ENCODE measurements at regions of chr4 and their contacts with region 1.

Region 1: GRCh38 chr4:73573794-73574406 is 46.3 kb downstream of the RASSF6 start:
- DNase-seq: peak; percentile 7 to 74
- ATAC-seq: peak; percentile 66 to 88; a peak in 5 of 6 replicates
- H3K4me3 ChIP-seq: no peak overlapping the region
- H3K27ac ChIP-seq: peak overlapping the region in 1 of 2 experiments; percentile 35; a peak in 2 of 6 replicates
- H3K4me1 ChIP-seq: no peaks in the 10 kb centered on the region
- CTCF ChIP-seq: peak; percentile 77
- EP300 ChIP-seq: no peak
- POLR2A ChIP-seq: no peak
- RAD21 ChIP-seq: peak; percentile 90

Region 2: GRCh38 chr4:73341454-73341853 is 232.4 kb before region 1 on chr4:
- CTCF ChIA-PET with region 1: interaction called, 10 read pairs
- POLR2A ChIA-PET with region 1: no interaction called
- DNase-seq: peak; percentile 15 to 67
- ATAC-seq: peak; percentile 91
- H3K4me3 ChIP-seq: no peak overlapping the region
- H3K27ac ChIP-seq: no peak overlapping the region
- H3K4me1 ChIP-seq: peaks cover 21% of the 10 kb centered on the region
- CTCF ChIP-seq: peak; percentile 70
- EP300 ChIP-seq: no peak
- POLR2A ChIP-seq: no peak
- RAD21 ChIP-seq: peak; percentile 86 to 88

Region 3: DNA sequence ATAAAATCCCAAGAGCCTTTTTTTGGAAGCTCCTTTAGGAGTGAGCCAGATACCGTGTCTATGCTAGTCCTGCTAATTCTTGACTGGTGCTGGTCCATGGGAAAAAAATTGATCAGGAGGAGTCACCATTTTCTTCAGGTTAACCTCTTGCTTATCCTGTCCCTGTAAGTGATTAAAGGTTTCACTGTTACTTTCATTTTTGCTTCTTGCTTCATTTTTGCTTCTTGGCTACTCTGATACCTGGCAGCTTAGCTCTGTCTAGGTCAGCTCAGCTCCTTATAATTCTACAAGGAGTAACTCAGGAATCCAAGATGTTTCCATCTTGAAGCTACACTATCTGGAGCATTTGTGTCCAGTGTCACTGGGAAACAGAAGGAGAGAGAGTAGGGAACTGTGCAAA is 46.7 kb before region 1 on chr4:
- CTCF ChIA-PET with region 1: no interaction called
- POLR2A ChIA-PET with region 1: no interaction called
- DNase-seq: no peak
- ATAC-seq: no peak
- H3K4me3 ChIP-seq: no peak overlapping the region
- H3K27ac ChIP-seq: no peak overlapping the region
- H3K4me1 ChIP-seq: no peaks in the 10 kb centered on the region
- CTCF ChIP-seq: no peak
- EP300 ChIP-seq: no peak
- POLR2A ChIP-seq: no peak
- RAD21 ChIP-seq: no peak

Region 4: GRCh38 chr4:73646117-73646516 is 72.2 kb after region 1 on chr4:
- CTCF ChIA-PET with region 1: interaction called, 57 read pairs
- POLR2A ChIA-PET with region 1: no interaction called
- DNase-seq: no peak
- ATAC-seq: no peak
- H3K4me3 ChIP-seq: no peak overlapping the region
- H3K27ac ChIP-seq: no peak overlapping the region
- H3K4me1 ChIP-seq: no peaks in the 10 kb centered on the region
- CTCF ChIP-seq: no peak
- EP300 ChIP-seq: no peak
- POLR2A ChIP-seq: no peak
- RAD21 ChIP-seq: no peak

Region 5: GRCh38 chr4:73653695-73654106 is 79.8 kb after region 1 on chr4:
- CTCF ChIA-PET with region 1: interaction called, 57 read pairs
- POLR2A ChIA-PET with region 1: no interaction called
- DNase-seq: peak; percentile 29 to 34
- ATAC-seq: peak; percentile 70 to 79; a peak in 5 of 6 replicates
- H3K4me3 ChIP-seq: no peak overlapping the region
- H3K27ac ChIP-seq: no peak overlapping the region
- H3K4me1 ChIP-seq: no peaks in the 10 kb centered on the region
- CTCF ChIP-seq: peak; percentile 67
- EP300 ChIP-seq: no peak
- POLR2A ChIP-seq: no peak
- RAD21 ChIP-seq: peak; percentile 86

Region 6: GRCh38 chr4:73662709-73663546 is 89.0 kb after region 1 on chr4:
- CTCF ChIA-PET with region 1: interaction called, 12 read pairs
- POLR2A ChIA-PET with region 1: no interaction called
- DNase-seq: peak; percentile 19 to 61
- ATAC-seq: peak; percentile 54 to 85; a peak in 4 of 6 replicates
- H3K4me3 ChIP-seq: no peak overlapping the region
- H3K27ac ChIP-seq: peak overlapping the region; percentile 54 to 83
- H3K4me1 ChIP-seq: peaks cover 5% of the 10 kb centered on the region; the same call in 2 of the 3 replicates
- CTCF ChIP-seq: peak; percentile 63
- EP300 ChIP-seq: no peak
- POLR2A ChIP-seq: no peak
- RAD21 ChIP-seq: peak; percentile 83 to 84